CD4-positive, alpha-beta T cell (primary cell): ENCODE measurements at regions of chr4 and their contacts with region 1.

Region 1: DNA sequence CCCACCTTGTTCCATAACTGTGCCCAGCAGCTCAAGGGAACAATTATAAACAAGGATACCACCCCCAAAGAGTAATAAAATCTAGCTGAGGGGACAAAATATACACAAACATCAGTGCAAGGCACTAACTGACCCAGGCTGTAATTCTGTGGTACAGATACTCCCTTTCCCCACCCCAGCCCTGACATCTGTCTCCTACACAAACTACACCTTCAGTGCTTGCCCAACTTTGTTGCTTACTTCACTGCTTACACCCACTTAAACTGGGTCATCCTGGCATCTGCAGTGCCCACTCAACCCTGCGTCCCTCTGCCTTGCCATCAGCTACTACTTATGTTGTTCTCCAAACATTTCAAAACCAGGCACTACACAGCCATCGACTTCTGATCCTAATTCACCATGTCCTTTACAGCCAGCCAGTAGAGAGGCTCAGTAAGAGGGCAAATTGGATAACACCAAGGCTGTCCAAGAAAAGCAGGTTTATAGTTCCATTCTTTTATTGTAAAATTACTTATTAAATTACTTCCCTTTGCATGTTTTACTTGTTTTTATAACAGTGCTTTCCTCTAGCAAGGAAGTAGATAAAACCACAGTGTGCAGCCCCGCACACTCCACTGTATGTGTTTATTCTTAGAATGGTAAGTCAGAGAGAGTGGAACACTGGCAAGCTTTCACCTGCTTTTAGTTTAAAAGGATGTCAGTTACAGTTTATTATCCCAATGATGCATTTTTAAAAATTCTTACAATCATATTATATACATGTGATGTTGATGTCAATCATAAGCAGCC is 149.6 kb downstream of the INPP4B start:
- DNase-seq: peak in 10 of 14 experiments; percentile 9 to 66 (median 32)
- ATAC-seq: peak; percentile 72
- H3K4me3 ChIP-seq: no peak overlapping the region
- H3K4me3 Mint-ChIP-seq: peak overlapping the region; percentile 70
- H3K27ac ChIP-seq: peak overlapping the region; percentile 74 to 76
- H3K27ac Mint-ChIP-seq: no peak overlapping the region
- H3K4me1 ChIP-seq: peaks cover 29% of the 10 kb centered on the region
- H3K4me1 Mint-ChIP-seq: peaks cover 74% of the 10 kb centered on the region
- H3K27me3 ChIP-seq: no peaks in the 10 kb centered on the region
- H3K27me3 Mint-ChIP-seq: no peaks in the 10 kb centered on the region
- CTCF ChIP-seq: no peak

Region 2: GRCh38 chr4:142713282-142714030 is 16.9 kb after region 1 on chr4:
- CTCF ChIA-PET with region 1: interaction called, 3 read pairs
- POLR2A ChIA-PET with region 1: interaction called, 7 read pairs
- intact Hi-C with region 1: loop called in 1 of 2 experiments (anchors 2 kb)
- DNase-seq: no peak
- ATAC-seq: no peak
- H3K4me3 ChIP-seq: no peak overlapping the region
- H3K4me3 Mint-ChIP-seq: peak overlapping the region; percentile 52
- H3K27ac ChIP-seq: peak overlapping the region; percentile 22 to 58
- H3K27ac Mint-ChIP-seq: peak overlapping the region; percentile 69
- H3K4me1 ChIP-seq: peaks cover 14% of the 10 kb centered on the region
- H3K4me1 Mint-ChIP-seq: peaks cover 68% of the 10 kb centered on the region
- H3K27me3 ChIP-seq: no peaks in the 10 kb centered on the region
- H3K27me3 Mint-ChIP-seq: no peaks in the 10 kb centered on the region
- CTCF ChIP-seq: no peak